Adrenal gland (tissue), 19 donors: ENCODE measurements at regions of chr1 and their contacts with region 1.

Region 1: DNA sequence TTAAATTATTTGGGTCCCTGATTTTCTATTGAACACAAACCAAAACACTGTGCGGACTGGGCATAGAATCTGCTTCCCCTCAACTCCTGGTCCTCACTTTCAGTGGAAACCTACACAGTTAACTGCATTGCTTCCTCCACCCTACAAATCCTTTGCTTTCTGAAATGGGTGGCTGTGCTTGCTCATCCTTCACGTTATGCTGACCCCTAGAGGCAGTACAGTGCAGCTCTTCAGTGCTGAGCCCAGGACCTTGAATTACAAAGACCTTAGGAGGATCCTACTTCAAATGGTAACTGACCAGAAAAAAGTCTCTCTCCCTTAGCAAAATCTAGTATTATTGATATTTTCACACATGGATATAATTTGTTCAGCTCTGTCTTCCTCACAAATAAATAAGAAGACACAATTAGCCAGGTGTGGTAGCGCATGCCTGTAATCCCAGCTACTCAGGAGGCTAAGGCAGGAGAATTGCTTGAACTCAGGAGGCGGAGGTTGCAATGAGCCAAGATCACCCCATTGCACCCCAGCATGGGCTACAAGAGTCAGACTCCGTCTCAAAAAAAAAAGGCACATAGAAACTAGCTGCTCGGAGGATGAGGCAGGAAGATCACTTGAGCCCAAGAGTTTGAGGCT is 63.4 kb upstream of the L1TD1 start:
- DNase-seq: peak; percentile 34 to 76 (median 45)
- H3K4me3 ChIP-seq: no peak overlapping the region
- H3K27ac ChIP-seq: no peak overlapping the region
- H3K4me1 ChIP-seq: no peaks in the 10 kb centered on the region
- H3K27me3 ChIP-seq: no peaks in the 10 kb centered on the region
- CTCF ChIP-seq: peak; percentile 41 to 87 (median 66)
- POLR2A ChIP-seq: no peak

Region 2: GRCh38 chr1:62082456-62083363 is 48.5 kb before region 1 on chr1:
- intact Hi-C with region 1: loop called (anchors 5 to 10 kb)
- DNase-seq: peak in 6 of 7 donors; percentile 28 to 71 (median 41)
- H3K4me3 ChIP-seq: no peak overlapping the region
- H3K27ac ChIP-seq: no peak overlapping the region
- H3K4me1 ChIP-seq: no peaks in the 10 kb centered on the region
- H3K27me3 ChIP-seq: no peaks in the 10 kb centered on the region
- CTCF ChIP-seq: peak; percentile 60 to 90 (median 78)
- POLR2A ChIP-seq: no peak